Right ventricle myocardium inferior (tissue), 1 donor: ENCODE measurements at regions of chr4 and their contacts with region 1.

Region 1: DNA sequence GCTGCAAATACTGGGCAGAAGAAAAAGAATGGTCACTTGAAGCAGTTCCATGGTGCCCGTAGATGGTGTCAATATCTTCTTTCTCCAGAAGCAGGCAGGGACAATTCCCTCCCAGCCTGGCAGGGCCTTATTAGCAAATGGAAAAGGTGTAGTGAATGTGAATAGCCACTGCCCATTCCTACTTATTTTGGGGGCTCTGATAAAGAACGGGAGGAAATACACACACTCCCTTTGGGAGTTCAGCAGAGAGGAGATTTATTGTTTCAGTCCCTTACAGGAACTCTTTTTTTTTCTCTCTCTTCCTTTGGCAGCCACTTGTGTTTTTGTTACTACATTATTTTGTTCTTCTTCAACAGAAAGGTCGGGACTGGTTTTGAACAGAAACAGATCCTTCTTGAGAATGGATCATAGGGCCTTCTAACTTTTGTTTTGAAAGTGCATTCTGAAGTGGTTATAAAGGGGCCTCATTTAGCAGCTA is at the start of gene EMCN:
- DNase-seq: peak; percentile 11
- ATAC-seq: no peak
- total RNA-seq, gene EMCN: 46.4 TPM

Region 2: GRCh38 chr4:100421361-100421978 is 96.4 kb before region 1 on chr4:
- intact Hi-C with region 1: loop called (anchors 5 kb)
- DNase-seq: no peak
- ATAC-seq: no peak

Region 3: DNA sequence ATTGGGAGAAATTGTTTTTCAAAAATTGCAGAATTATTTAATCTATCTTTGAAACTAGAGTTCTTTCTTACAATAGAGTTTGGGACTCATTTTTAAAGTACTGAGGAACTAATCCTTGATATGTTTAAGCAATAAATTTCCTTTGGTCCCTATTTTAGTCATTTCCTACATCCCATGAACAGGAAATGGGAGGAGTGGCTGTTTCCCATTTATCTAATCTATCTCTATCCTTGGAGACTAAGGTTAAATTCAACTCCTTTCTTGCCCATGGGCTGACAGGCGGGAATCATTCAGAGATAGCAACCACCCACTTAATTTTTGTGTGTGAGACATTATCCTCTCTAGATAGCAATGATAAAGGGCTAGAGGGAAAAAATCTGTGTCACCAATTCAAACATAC is 131.5 kb after region 1 on chr4:
- intact Hi-C with region 1: loop called (anchors 2 kb)
- DNase-seq: no peak
- ATAC-seq: no peak